Right ventricle myocardium superior (tissue), 1 donor: ENCODE measurements at regions of chr1 and their contacts with region 1.

Region 1: GRCh38 chr1:78004719-78005447 is at the start of gene DNAJB4:
- DNase-seq: no peak
- ATAC-seq: peak; percentile 99
- total RNA-seq, gene DNAJB4: 99.0 TPM

Region 2: DNA sequence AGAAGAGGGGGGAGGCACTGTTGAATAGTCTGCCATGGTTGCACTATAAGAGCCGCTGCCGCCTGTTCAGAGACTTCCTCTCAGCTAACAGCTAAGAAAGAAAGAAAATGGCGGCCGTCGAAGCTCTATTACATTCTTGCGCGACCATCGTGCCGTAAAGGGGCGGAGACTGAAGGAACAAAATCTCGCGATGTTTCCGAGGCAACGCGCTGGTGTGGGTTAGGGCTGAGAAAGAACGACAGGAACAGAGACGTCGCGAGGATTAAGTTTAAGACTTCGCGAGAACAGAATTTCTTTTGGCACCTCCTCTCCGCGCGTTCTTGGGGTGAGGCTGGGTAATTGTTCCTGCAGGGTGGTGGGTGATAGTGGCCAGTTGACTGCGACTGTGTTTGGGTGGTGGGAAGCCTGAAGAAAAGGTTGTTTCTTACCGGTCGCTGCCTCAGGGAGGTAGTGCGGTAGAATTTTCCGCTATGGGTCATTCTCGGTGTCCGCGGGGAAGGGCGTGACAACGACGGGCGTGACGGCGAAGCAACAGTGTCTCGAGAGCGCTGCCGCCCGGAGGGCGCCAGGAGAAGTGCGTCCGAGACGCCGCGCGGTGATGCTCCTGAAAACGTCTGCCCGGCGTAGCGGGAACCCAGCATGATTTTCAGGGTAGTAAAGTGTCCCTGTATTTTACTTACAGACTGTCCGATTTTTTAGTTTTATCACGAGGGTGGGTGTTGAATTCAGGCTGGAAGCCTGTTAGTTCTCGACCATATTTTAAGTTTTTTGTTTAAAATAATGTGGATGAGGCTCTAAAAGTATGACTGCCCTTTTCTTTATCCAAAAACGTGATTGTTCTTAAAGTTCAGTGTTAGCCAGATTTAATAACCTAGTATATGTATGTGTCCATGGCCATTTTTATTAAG is 25.7 kb before region 1 on chr1 and contains the start of gene FUBP1:
- intact Hi-C with region 1: loop called (anchors 2 kb)
- DNase-seq: peak; percentile 95
- ATAC-seq: peak; percentile 94
- total RNA-seq, gene FUBP1: 47.9 TPM

Region 3: GRCh38 chr1:78045926-78046778 is 41.3 kb after region 1 on chr1 and contains the start of gene GIPC2:
- intact Hi-C with region 1: loop called (anchors 5 kb)
- DNase-seq: peak; percentile 58
- ATAC-seq: peak; percentile 74
- total RNA-seq, gene GIPC2: 2.0 TPM

Region 4: DNA sequence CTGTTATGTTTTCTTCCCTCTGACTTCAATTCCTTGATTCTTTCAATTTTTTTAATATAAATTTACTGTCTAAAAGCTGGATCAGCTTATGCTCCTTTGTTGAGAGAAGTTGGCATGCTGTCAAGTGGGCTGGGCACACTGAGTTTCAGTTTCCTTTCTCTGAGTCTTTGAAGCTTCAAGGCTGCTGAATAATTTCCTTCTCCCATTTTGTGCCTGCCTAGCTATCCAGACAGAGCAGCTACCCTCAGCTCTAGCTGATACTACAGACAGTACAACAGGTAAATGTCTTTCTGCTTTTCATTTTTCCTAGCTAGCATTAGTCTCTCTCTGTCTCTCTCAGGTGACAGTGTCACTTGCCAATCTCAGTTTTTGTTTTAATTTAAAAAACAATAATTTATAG is 644.7 kb after region 1 on chr1 and contains the start of gene IFI44:
- intact Hi-C with region 1: loop called (anchors 10 kb)
- DNase-seq: peak; percentile 90
- ATAC-seq: peak; percentile 92
- total RNA-seq, gene IFI44: 6.7 TPM